Heart right ventricle (tissue), 16 donors: ENCODE measurements at regions of chr3 and their contacts with region 1.

Region 1: DNA sequence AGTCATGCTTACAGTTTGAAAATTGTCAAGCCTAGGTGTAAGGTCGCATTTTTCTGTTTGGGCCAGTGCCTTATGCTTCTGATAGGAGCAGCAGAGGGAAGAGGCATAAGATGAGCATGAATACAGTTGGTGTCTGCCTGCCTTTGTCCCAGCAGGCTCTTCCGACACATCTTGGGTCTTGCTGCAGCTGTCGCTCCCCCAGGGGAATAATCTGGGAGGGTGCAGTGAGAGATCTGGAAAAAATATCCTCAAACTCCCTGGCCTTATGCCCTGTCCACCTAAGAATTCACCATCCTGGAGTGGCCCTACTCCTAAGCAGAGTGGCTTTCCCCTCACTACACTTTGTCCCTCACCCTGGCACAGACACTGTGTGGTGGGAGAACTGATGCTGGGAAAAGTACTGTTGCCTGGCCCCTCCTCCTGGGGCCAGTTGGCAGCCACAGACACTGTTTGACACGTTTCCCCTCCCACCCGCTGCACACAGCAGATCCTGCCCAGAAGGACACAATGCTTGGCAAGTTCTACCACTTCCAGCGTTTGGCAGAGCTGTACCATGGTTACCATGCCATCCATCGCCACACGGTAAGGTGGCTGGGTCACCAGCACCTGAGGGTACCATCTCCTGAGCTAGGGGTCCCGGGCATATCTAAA is 21.1 kb upstream of the RHO start:
- DNase-seq: peak; percentile 49 to 56
- ATAC-seq: peak; percentile 46 to 84 (median 74)
- H3K4me3 ChIP-seq: no peak overlapping the region
- H3K27ac ChIP-seq: peak overlapping the region in 4 of 10 donors; percentile 12 to 36 (median 28)
- H3K4me1 ChIP-seq: peaks cover 6 to 63% (median 47%) of the 10 kb centered on the region in 9 donors
- H3K27me3 ChIP-seq: no peaks in the 10 kb centered on the region
- CTCF ChIP-seq: no peak

Region 2: DNA sequence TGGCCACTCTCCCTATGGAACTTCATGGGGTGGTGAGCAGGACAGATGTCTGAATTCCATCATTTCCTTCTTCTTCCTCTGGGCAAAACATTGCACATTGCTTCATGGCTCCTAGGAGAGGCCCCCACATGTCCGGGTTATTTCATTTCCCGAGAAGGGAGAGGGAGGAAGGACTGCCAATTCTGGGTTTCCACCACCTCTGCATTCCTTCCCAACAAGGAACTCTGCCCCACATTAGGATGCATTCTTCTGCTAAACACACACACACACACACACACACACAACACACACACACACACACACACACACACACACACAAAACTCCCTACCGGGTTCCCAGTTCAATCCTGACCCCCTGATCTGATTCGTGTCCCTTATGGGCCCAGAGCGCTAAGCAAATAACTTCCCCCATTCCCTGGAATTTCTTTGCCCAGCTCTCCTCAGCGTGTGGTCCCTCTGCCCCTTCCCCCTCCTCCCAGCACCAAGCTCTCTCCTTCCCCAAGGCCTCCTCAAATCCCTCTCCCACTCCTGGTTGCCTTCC is 23.0 kb after region 1 on chr3:
- intact Hi-C with region 1: loop called in 1 of 10 experiments (anchors 1 kb)
- DNase-seq: no peak
- ATAC-seq: peak in 6 of 8 donors; percentile 4 to 46 (median 28)
- H3K4me3 ChIP-seq: no peak overlapping the region
- H3K27ac ChIP-seq: peak overlapping the region in 1 of 10 donors; percentile 64
- H3K4me1 ChIP-seq: peaks cover 5 to 22% (median 9%) of the 10 kb centered on the region in 9 donors
- H3K27me3 ChIP-seq: no peaks in the 10 kb centered on the region
- CTCF ChIP-seq: no peak

Region 3: DNA sequence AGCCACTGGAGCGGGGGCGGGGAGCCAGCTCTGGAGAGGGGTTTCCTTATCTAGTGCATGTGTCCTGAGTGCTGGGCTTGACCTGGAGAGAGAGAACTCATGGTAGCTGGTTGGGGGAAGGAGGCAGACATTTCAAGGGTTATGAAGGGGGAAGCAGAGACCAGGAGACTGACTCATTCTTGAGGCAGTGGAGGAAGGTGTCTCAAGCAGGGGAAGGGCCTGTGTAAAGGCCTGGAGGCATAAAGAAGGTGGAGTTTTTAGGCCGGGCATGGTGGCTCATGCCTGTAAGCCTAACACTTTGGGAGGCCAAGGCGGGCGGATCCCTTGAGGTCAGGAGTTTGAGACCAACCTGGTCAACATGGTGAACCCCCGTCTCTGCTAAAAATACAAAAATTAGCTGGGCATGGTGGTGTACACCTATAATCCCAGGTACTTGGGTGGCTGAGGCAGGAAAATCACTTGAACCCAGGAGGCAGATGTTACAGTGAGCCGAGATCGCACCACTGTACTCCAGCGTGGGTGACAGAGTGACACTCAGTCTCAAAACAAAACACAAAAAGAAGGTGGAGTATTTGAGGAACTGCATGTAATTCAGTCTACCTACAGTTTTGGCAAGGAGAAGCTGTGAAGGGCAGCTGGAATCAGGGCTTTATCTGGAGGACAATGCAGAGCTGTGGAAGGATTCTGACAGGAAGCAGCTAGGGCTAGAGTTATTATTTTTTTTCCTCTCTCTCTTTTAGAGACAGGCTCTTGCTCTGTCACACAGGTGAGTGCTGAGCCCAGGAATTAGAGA is 42.3 kb after region 1 on chr3:
- intact Hi-C with region 1: loop called in 5 of 10 experiments (anchors 5 to 10 kb)
- DNase-seq: no peak
- ATAC-seq: no peak
- H3K4me3 ChIP-seq: no peak overlapping the region
- H3K27ac ChIP-seq: no peak overlapping the region
- H3K4me1 ChIP-seq: peaks cover 3 to 26% (median 22%) of the 10 kb centered on the region in 9 donors
- H3K27me3 ChIP-seq: no peaks in the 10 kb centered on the region
- CTCF ChIP-seq: no peak

Region 4: GRCh38 chr3:129560901-129561594 is 53.7 kb after region 1 on chr3:
- intact Hi-C with region 1: loop called in 1 of 10 experiments (anchors 10 kb)
- DNase-seq: peak; percentile 86 to 90
- ATAC-seq: peak; percentile 73 to 90 (median 86)
- H3K4me3 ChIP-seq: no peak overlapping the region
- H3K27ac ChIP-seq: peak overlapping the region; percentile 50 to 94 (median 85)
- H3K4me1 ChIP-seq: peaks cover 45 to 100% (median 91%) of the 10 kb centered on the region in 9 donors
- H3K27me3 ChIP-seq: no peaks in the 10 kb centered on the region
- CTCF ChIP-seq: no peak

Region 5: GRCh38 chr3:129606636-129607390 is 99.5 kb after region 1 on chr3 and contains the start of gene PLXND1:
- intact Hi-C with region 1: loop called in 2 of 10 experiments (anchors 5 kb)
- DNase-seq: peak; percentile 83 to 87
- ATAC-seq: peak; percentile 63 to 78 (median 68)
- H3K4me3 ChIP-seq: peak within 1 kb of the TSS; percentile 62 to 91 (median 74)
- H3K27ac ChIP-seq: peak within 1 kb of the TSS; percentile 89 to 99 (median 94)
- H3K4me1 ChIP-seq: peaks cover 16 to 78% (median 72%) of the 10 kb centered on the region in 9 donors
- H3K27me3 ChIP-seq: peaks cover 0 to 18% (median 4%) of the 10 kb centered on the region in 7 donors
- CTCF ChIP-seq: no peak
- total RNA-seq, gene PLXND1: 40.9 to 106 (median 62.8) TPM

Region 6: DNA sequence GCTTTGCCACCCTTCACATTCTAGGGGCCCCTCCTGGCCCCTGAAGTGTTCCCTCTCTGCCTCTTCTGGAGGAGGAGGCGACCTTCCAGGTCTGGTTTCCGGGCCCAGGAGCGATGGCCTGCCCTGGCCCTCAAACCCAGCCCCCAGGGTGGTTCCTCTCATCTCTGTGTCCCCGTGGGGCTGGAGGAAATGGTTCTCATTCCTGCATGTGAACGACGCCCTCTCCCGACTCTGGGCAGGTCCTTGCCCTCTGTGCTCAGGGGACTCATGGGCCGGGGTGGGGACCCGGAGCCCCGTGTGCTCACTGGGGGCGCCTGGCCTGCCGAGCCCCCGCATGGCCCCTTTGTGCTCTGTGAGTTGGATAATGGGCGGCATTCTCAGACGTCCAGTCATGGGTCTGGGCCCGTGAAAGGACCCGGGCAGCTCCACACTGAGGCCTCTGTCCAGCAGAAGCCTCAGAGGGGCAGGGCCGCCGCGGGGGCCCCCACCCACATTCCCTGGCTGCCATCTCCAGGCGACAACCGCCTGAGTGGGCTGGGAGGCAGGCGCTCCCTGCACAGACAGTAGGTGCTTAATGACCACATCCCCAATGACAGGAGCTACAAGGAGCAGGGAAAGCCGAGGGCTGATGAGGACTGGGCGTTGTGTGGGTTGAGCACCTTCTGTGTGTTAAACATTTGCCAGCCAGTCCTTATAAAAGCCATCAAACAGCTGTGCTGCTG is 104.7 kb after region 1 on chr3:
- intact Hi-C with region 1: loop called in 1 of 10 experiments (anchors 5 kb)
- DNase-seq: peak in 1 of 2 donors; percentile 62
- ATAC-seq: peak in 6 of 8 donors; percentile 14 to 53 (median 19)
- H3K4me3 ChIP-seq: no peak overlapping the region
- H3K27ac ChIP-seq: peak overlapping the region; percentile 13 to 98 (median 75)
- H3K4me1 ChIP-seq: peaks cover 34 to 100% (median 88%) of the 10 kb centered on the region in 9 donors
- H3K27me3 ChIP-seq: no peaks in the 10 kb centered on the region
- CTCF ChIP-seq: peak in 5 of 9 donors; percentile 15 to 35 (median 16)

Region 7: DNA sequence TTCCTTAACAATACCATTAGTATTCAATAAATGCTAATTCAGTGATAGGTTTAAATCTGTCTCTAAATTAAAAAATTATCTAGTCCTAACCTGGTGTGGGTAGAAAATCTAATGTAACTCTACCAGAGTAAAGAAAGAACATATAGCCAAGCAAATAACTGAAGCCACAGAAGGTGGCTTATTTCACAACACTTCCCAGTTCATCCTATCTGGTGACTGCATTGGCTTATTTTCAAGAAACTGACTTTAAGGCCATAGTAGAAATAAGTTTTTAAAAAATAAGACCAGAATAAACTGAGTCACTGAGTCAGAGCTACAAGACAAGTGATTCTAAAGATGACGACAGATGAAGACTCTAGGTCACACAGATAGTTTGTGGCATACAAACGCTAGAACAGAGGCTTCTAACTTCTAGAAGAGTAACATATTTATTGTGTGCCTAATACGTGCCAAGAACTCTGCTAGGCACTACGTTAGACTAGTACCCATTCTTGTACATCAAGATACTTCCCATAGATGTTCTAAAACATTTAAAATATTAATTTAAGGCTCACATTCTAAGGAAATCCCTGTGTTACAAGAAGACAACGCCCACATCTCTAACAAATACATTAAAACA is 360.3 kb after region 1 on chr3:
- intact Hi-C with region 1: no loop called
- DNase-seq: no peak
- ATAC-seq: no peak
- H3K4me3 ChIP-seq: no peak overlapping the region
- H3K27ac ChIP-seq: no peak overlapping the region
- H3K4me1 ChIP-seq: peaks cover 0 to 17% (median 7%) of the 10 kb centered on the region in 9 donors
- H3K27me3 ChIP-seq: no peaks in the 10 kb centered on the region
- CTCF ChIP-seq: no peak

Region 8: GRCh38 chr3:129934234-129935123 is 427.2 kb after region 1 on chr3:
- intact Hi-C with region 1: loop called in 1 of 10 experiments (anchors 10 kb)
- DNase-seq: no peak
- ATAC-seq: peak in 6 of 8 donors; percentile 56 to 65 (median 61)
- H3K4me3 ChIP-seq: peak overlapping the region in 5 of 10 donors; percentile 12 to 44 (median 32)
- H3K27ac ChIP-seq: no peak overlapping the region
- H3K4me1 ChIP-seq: peaks cover 0 to 5% (median 0%) of the 10 kb centered on the region in 9 donors
- H3K27me3 ChIP-seq: peaks cover 0 to 5% (median 0%) of the 10 kb centered on the region in 7 donors
- CTCF ChIP-seq: peak; percentile 85 to 94 (median 92)